ENCODE measurements at regions of chr3 and their contacts with region 1.

Region 1: DNA sequence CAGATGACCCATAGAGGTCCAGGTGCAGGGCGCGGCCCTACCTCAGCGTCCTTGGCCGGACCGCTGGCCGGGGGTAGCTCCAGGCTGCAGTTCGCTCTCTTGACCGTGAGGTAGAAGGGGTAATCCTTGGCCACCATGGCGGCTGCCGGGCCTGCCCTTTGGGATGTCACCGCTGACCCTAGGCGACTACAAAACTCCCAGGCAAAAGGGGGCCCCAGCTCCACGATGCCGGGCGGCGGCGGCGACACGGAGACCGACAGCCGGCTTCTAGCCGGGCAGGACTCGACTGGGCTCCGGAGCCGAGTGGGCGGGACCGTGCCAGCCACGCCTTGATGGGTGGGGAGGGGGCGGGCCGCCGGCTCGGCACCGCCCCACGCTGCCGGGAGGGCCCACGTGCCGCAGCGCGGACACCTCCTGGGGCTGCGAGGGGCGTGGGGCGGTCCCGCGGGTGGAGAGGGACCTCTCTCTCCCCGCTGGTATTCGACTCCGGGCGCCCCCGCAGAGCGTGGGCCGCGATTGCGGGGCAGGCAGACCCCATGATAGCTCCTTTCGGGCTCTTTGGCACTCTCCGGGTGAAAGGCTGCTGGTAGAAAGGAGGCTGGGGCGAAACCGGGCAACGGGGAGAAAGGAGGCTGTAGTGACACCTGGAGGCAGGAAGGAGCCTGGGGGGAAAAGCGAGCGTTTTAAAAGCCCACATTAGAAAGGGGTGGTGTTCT is at the start of gene ARHGEF3:
- DNase-seq: peak; percentile 85
- H3K4me3 ChIP-seq: peak within 1 kb of the TSS; percentile 57 to 93 (median 72)
- H3K27ac ChIP-seq: peak within 1 kb of the TSS; percentile 80
- H3K4me1 ChIP-seq: peaks cover 19% of the 10 kb centered on the region
- H3K27me3 ChIP-seq: no peaks in the 10 kb centered on the region
- CTCF ChIP-seq: peak; percentile 45 to 65
- total RNA-seq, gene ARHGEF3: 17.5 to 43.7 TPM

Region 2: DNA sequence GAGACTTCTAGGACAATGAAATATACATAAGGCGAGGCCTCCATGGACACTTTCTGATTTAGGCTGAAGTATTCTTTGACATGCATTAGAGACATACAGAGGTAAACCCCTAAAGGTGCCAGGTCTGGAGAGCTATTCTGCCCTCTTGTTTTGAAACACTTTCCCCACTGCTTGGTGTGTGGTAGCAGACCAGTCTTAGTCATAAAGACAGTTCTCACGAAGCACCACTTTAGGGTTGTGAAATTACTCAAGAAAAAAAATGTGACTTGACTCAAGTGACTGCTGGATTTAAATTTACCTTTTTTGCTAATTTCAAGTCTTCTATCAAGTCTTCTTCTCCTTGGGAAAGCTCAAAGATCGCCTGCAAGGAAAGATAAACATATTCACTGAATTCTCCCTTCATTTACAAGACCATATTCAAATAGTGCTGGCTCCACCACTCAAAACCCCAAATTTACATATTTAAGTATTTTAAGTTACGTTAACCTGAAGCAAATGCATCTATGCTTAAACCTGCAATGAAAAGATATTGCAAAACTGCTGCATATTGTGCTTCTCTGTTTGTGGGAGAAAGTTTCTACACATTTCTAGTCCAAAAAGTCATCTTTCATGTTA is 48.5 kb before region 1 on chr3:
- CTCF ChIA-PET with region 1: interaction called, 6 read pairs
- dilution Hi-C with region 1: no loop called
- in situ Hi-C with region 1: no loop called
- intact Hi-C with region 1: loop called (anchors 1 kb)
- DNase-seq: peak; percentile 40
- H3K4me3 ChIP-seq: no peak overlapping the region
- H3K27ac ChIP-seq: no peak overlapping the region
- H3K4me1 ChIP-seq: peaks cover 8% of the 10 kb centered on the region
- H3K27me3 ChIP-seq: no peaks in the 10 kb centered on the region
- CTCF ChIP-seq: no peak

Region 3: DNA sequence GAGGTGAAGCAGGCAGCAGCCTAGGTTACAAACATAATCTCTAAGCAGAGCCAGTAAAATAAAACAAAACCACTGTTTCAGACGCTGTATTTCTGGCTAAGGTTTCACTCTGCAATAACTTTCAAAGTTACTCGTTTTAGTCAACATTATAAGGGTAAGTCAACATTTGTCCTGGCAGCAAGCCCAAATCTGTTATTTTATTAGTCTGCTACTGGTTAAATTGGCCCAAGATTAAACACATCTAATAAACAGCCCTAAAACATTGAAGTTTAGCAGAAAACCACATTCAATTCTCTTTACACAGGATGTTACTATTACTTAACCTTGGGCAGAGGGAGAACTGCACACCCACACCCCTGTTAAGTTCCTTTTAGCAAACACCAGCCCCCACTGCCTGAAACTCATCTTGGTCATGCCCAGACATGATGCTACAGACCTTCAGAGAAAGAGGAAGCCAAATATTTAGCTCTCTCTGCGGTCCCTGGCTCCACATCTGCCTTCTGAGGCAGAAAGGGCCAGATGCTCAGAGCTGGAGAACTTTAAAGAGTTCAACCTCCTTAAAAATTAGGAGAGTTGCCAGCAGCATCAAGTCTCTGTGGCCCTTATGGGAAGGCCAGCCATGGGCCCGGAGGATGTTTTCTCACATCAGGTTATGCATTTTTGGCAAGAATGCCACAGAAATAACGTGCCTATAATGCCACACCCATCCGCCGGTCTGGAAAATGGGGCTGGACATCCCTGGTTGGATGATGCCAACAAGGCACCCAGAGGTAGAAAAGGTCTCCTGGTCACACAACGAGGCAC is 18.0 kb before region 1 on chr3:
- CTCF ChIA-PET with region 1: interaction called, 8 read pairs
- dilution Hi-C with region 1: no loop called
- in situ Hi-C with region 1: no loop called
- intact Hi-C with region 1: loop called (anchors 1 kb)
- DNase-seq: peak; percentile 95
- H3K4me3 ChIP-seq: peak overlapping the region in 2 of 3 experiments; percentile 23 to 25
- H3K27ac ChIP-seq: peak overlapping the region; percentile 91
- H3K4me1 ChIP-seq: peaks cover 46% of the 10 kb centered on the region
- H3K27me3 ChIP-seq: no peaks in the 10 kb centered on the region
- CTCF ChIP-seq: no peak

Region 4: GRCh38 chr3:56887402-56888025 is 85.7 kb after region 1 on chr3:
- CTCF ChIA-PET with region 1: interaction called, 6 read pairs
- dilution Hi-C with region 1: no loop called
- in situ Hi-C with region 1: no loop called
- intact Hi-C with region 1: loop called (anchors 2 kb)
- DNase-seq: no peak
- H3K4me3 ChIP-seq: no peak overlapping the region
- H3K27ac ChIP-seq: no peak overlapping the region
- H3K4me1 ChIP-seq: peaks cover 25% of the 10 kb centered on the region
- H3K27me3 ChIP-seq: no peaks in the 10 kb centered on the region
- CTCF ChIP-seq: no peak

Region 5: DNA sequence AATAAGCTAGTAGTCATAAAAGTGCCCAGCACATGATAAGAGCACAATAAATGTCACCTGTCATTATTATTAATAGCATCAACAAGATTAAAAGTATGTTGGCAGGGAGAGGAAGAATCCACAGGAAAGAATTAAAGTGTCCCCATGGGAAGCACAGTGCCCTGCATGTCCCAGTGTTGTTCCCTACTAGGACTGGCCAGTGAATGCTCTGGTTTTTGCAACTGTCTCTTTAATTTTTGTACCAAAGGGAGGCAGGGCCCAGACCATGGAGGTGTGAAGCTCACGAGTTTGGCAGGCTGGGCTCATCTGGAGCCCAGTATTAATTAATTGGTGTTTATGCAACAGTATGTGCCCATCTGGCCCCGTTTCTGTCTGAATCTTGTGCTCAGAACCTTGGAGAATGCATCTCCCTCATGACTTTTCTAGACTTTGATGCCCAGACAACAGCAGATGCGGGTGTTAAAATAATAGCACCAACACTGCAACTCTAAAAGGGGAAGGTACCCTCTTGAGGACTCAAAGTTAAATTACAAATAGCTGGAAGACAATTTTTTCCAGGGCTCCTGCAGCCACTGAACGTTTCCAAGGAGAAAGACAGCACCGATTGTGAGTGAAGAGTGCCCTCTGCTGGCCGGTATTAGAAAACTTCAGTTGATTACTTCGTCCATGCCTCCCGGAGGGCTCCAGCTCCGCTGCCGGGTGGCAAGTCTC is 186.8 kb after region 1 on chr3:
- CTCF ChIA-PET with region 1: interaction called, 8 read pairs
- dilution Hi-C with region 1: no loop called
- in situ Hi-C with region 1: loop called in 1 of 2 experiments (anchors 10 kb)
- intact Hi-C with region 1: loop called (anchors 1 kb)
- DNase-seq: peak; percentile 59
- H3K4me3 ChIP-seq: no peak overlapping the region
- H3K27ac ChIP-seq: no peak overlapping the region
- H3K4me1 ChIP-seq: no peaks in the 10 kb centered on the region
- H3K27me3 ChIP-seq: no peaks in the 10 kb centered on the region
- CTCF ChIP-seq: peak; percentile 46 to 70

Region 6: DNA sequence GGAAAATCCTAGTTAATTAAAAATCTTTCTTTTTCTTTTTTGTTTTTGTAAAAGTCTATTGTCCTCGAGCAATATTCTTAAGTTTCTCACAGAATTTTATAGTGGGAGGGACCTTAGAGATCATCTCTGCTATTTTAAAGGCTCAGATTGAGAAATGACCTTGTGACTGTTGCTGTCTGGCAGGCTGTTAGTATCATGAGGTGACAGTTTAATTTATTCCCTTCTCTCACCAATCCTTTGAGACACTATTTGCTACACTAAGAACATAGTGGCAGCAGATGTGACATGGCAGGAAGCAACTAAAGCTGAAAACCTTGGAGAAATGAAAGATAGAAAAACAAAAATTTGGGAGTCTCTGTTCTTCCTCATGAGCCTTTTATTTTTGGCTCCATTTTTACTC is 450.6 kb after region 1 on chr3:
- CTCF ChIA-PET with region 1: no interaction called
- dilution Hi-C with region 1: no loop called
- in situ Hi-C with region 1: no loop called
- intact Hi-C with region 1: no loop called
- DNase-seq: no peak
- H3K4me3 ChIP-seq: no peak overlapping the region
- H3K27ac ChIP-seq: no peak overlapping the region
- H3K4me1 ChIP-seq: no peaks in the 10 kb centered on the region
- H3K27me3 ChIP-seq: no peaks in the 10 kb centered on the region
- CTCF ChIP-seq: no peak

Measured in mammary epithelial cell (primary cell).